Activated CD4-positive, alpha-beta memory T cell treated with anti-CD3 and anti-CD28 coated beads for 36 hours (primary cell): ENCODE measurements at regions of chr5 and their contacts with region 1.

Region 1: DNA sequence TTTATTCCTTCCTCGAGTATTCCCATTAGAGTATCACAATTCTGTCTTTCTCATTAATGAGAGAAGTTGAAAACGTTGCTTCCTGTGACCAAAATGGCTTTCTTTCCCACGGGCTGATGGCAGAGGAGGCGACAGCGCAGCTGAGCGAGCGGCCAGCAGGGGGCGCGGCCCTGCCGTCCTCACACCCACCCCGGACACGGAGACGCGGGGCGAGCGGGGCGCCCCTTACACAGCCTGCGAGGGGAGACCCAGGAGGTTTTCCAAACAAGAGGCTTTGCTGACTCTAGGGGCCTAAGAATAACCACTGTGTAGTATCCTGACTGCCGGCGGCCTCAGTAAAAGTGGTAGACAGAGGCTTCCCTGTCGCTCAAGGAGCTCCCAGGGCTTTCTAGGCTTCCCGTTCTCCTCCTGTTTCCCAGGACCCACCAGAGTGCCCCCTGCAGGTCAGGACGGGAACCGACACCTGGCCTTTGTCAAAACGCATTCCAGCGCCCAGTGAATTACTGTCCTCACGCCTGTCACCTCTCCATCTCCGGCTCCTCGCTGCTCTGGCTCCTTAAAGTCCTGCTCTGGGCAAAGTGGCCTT is 27.3 kb upstream of the FGF1 start:
- DNase-seq: peak; percentile 89
- H3K4me3 Mint-ChIP-seq: peak overlapping the region; percentile 67
- H3K27ac Mint-ChIP-seq: no peak overlapping the region
- H3K4me1 Mint-ChIP-seq: peaks cover 7% of the 10 kb centered on the region
- H3K27me3 Mint-ChIP-seq: peaks cover 2% of the 10 kb centered on the region

Region 2: GRCh38 chr5:142644640-142645361 is 68.4 kb before region 1 on chr5:
- CTCF ChIA-PET with region 1: interaction called, 11 read pairs
- POLR2A ChIA-PET with region 1: no interaction called
- intact Hi-C with region 1: no loop called
- DNase-seq: no peak
- H3K4me3 Mint-ChIP-seq: no peak overlapping the region
- H3K27ac Mint-ChIP-seq: no peak overlapping the region
- H3K4me1 Mint-ChIP-seq: no peaks in the 10 kb centered on the region
- H3K27me3 Mint-ChIP-seq: peaks cover 3% of the 10 kb centered on the region

Region 3: GRCh38 chr5:142735331-142736246 is 22.4 kb after region 1 on chr5:
- CTCF ChIA-PET with region 1: interaction called, 42 read pairs
- POLR2A ChIA-PET with region 1: no interaction called
- intact Hi-C with region 1: no loop called
- DNase-seq: no peak
- H3K4me3 Mint-ChIP-seq: no peak overlapping the region
- H3K27ac Mint-ChIP-seq: no peak overlapping the region
- H3K4me1 Mint-ChIP-seq: peaks cover 19% of the 10 kb centered on the region
- H3K27me3 Mint-ChIP-seq: no peaks in the 10 kb centered on the region

Region 4: DNA sequence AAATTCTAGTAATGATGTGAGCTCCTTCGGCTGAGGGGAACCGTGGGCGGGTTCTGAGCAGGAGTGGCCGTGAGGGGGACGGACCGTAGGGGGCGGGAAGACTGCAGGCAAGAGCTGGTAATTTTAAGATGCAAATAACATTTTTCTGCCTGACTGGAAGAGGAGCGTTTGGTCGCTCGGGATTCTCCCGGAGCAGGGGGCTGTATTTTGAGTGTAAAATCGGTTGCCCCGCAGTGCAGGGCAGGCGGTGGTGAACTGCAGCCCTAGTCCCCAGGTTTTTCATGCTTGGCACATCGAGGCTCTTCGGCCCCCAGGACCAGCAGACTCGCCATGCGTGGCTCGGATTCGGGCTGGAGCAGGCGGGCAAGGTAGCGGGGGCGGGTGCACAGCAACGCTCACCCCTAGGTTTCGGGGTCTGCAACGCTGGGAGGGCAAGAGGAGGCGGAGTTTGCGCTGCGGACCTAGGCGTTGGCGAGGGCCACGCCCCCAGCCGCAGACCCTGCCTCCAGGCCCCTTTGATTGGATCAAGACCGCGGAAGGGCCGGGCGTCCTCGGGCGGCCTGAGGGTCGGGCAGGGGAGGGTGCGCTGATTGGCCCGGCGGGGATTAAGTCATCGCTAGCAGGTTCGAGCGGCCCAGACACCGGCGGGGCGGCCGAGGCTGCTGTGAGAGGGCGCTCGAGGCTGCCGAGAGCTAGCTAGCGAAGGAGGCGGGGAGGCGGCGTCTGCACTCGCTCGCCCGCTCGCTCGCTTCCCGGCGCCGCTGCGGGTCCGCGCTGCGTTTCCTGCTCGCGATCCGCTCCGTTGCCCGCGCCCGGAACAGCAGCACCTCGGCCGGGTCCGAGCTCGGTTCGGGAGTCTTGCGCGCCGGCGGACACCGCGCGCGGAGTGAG is 56.8 kb after region 1 on chr5 and contains the start of gene ARHGAP26:
- CTCF ChIA-PET with region 1: interaction called, 42 read pairs
- POLR2A ChIA-PET with region 1: no interaction called
- intact Hi-C with region 1: no loop called
- DNase-seq: peak; percentile 96
- H3K4me3 Mint-ChIP-seq: peak within 1 kb of the TSS; percentile 92
- H3K27ac Mint-ChIP-seq: peak within 1 kb of the TSS; percentile 78
- H3K4me1 Mint-ChIP-seq: peaks cover 43% of the 10 kb centered on the region
- H3K27me3 Mint-ChIP-seq: no peaks in the 10 kb centered on the region
- total RNA-seq, gene ARHGAP26: 16.4 to 16.9 TPM

Region 5: GRCh38 chr5:142810743-142811290 is 97.6 kb after region 1 on chr5:
- CTCF ChIA-PET with region 1: no interaction called
- POLR2A ChIA-PET with region 1: no interaction called
- intact Hi-C with region 1: no loop called
- DNase-seq: no peak
- H3K4me3 Mint-ChIP-seq: no peak overlapping the region
- H3K27ac Mint-ChIP-seq: no peak overlapping the region
- H3K4me1 Mint-ChIP-seq: no peaks in the 10 kb centered on the region
- H3K27me3 Mint-ChIP-seq: no peaks in the 10 kb centered on the region

Region 6: GRCh38 chr5:142862594-142862993 is 149.4 kb after region 1 on chr5:
- CTCF ChIA-PET with region 1: interaction called, 40 read pairs
- POLR2A ChIA-PET with region 1: no interaction called
- intact Hi-C with region 1: loop called (anchors 1 kb)
- DNase-seq: no peak
- H3K4me3 Mint-ChIP-seq: no peak overlapping the region
- H3K27ac Mint-ChIP-seq: no peak overlapping the region
- H3K4me1 Mint-ChIP-seq: peaks cover 25% of the 10 kb centered on the region
- H3K27me3 Mint-ChIP-seq: no peaks in the 10 kb centered on the region

Region 7: DNA sequence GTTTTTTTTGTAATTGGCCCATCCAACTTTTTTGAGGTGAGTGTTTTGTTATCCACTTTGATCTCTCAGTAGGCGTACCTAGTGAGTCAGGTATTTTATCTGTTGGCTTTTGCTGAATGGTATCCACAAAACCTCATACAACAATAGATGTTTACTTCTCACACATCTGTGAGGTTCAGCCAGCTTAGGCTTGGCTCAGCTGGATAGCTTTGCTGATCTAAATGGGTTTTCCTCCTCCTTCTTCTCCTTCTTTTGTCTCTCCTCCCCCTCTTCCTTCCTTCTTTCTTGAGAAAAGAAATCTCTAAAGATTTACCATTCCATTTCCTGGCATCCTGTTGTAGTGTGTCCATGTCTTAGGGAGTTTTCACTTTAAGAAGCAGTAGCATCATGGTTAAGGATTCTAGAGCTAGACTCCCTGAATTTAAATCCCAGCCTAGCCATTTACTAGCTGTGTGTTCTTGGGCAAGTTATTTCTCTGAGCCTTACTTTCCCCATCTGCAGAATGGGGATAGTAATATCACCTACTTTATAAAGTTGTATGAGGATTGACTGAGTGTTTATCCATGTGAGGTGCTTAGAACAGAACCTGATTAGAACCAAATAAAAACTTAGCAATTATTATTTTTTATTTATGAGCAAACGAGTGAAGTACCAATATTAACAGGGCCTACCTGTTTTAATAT is 183.3 kb after region 1 on chr5:
- CTCF ChIA-PET with region 1: interaction called, 18 read pairs
- POLR2A ChIA-PET with region 1: no interaction called
- intact Hi-C with region 1: no loop called
- DNase-seq: no peak
- H3K4me3 Mint-ChIP-seq: no peak overlapping the region
- H3K27ac Mint-ChIP-seq: no peak overlapping the region
- H3K4me1 Mint-ChIP-seq: no peaks in the 10 kb centered on the region
- H3K27me3 Mint-ChIP-seq: no peaks in the 10 kb centered on the region